ENCODE measurements at regions of chrX and their contacts with region 1.

Region 1: DNA sequence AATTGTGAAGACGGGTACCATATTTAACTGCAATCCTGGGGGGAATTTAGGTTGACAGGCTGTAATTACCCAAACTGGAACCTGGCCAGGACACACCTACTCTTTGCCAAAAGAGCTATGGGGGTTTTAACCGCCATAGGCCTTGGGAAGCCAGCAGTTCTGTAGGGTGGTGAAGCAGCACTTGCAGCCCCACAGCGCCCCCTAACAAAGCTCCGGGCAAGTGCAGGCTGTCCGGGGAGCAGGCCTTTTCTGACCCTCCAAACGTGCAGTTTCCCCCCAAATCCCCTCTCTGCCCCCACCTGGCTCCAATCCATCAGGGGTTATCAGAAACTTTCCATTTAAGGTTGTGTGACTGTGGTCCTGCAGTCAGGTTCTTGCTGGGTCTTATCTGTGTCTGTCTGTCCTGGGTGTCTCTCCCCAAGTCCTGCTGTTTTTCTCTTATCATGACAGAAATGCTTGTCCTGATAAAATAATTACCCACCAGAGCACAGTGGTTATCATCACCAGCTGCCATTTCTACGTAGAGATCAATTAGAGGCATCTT is 350.9 kb downstream of the MID1IP1 start:
- DNase-seq: peak; percentile 74

Region 2: GRCh38 chrX:38704146-38704882 is 447.9 kb before region 1 on chrX:
- CTCF ChIA-PET with region 1: interaction called, 10 read pairs
- POLR2A ChIA-PET with region 1: no interaction called
- DNase-seq: no peak

Measured in HEK293T (cell line).